Heart right ventricle (tissue), 16 donors: ENCODE measurements at regions of chr6 and their contacts with region 1.

Region 1: GRCh38 chr6:83067448-83068413 is at the start of gene DOP1A:
- DNase-seq: peak; percentile 95 to 96
- ATAC-seq: peak; percentile 96 to 99 (median 96)
- H3K4me3 ChIP-seq: peak within 1 kb of the TSS; percentile 64 to 93 (median 78)
- H3K27ac ChIP-seq: peak within 1 kb of the TSS; percentile 39 to 93 (median 87)
- H3K4me1 ChIP-seq: peaks cover 0 to 62% (median 32%) of the 10 kb centered on the region in 9 donors
- H3K27me3 ChIP-seq: no peaks in the 10 kb centered on the region
- CTCF ChIP-seq: peak; percentile 93 to 100 (median 98)
- total RNA-seq, gene DOP1A: 10.0 to 26.8 (median 22.2) TPM

Region 2: DNA sequence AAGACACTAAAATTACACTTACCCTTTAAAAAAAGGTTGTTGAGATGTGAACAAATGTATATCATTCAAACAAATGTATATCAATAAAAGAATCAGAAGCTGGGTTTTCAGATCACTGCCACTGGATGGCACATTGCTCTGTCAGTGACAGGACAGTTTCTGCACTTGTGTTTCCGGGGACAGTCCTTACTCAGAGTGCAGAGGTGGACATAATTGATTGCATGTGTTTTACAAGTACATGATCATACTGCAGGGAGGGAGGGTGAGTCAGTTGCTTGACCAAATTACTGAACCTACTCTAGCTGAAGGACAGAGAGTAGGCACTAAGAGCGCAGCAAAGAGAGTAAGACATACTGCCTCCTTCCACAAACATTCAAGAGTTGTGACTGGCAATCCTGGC is 1617.6 kb before region 1 on chr6:
- intact Hi-C with region 1: no loop called
- DNase-seq: no peak
- ATAC-seq: peak in 5 of 8 donors; percentile 33 to 72 (median 37)
- H3K4me3 ChIP-seq: no peak overlapping the region
- H3K27ac ChIP-seq: no peak overlapping the region
- H3K4me1 ChIP-seq: no peaks in the 10 kb centered on the region
- H3K27me3 ChIP-seq: no peaks in the 10 kb centered on the region
- CTCF ChIP-seq: peak in 1 of 9 donors; percentile 13

Region 3: DNA sequence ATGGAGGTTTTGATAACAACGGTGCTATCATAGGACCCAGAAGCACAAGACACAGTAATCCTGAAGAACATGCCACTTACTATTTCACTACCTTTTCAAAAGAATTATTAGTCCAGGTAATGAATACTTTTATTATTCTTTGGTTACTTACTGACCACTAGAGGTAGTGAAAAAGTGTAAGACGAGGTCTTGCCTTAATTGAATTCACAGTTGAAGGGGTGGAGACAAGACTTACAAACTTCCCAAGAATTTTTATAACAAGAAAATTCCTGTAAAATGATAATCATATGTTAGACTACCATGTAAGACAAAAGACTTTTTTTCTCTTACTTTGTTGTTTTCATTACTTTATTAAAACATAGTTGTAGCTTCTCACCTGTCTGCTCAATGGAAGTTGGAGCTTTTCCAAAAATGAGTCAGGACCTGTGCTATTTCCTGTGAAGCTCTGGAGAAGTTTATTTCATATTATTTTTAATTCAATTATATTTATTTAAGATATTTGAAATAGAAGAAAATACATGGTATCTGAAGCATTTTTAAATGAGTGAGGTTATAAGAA is 52.1 kb after region 1 on chr6:
- intact Hi-C with region 1: loop called in 1 of 10 experiments (anchors 5 kb)
- DNase-seq: no peak
- ATAC-seq: no peak
- H3K4me3 ChIP-seq: no peak overlapping the region
- H3K27ac ChIP-seq: no peak overlapping the region
- H3K4me1 ChIP-seq: no peaks in the 10 kb centered on the region
- H3K27me3 ChIP-seq: no peaks in the 10 kb centered on the region
- CTCF ChIP-seq: no peak

Region 4: GRCh38 chr6:83199863-83200225 is 132.1 kb after region 1 on chr6:
- intact Hi-C with region 1: loop called in 4 of 10 experiments (anchors 5 to 10 kb)
- DNase-seq: no peak
- ATAC-seq: peak in 2 of 8 donors; percentile 46 to 67
- H3K4me3 ChIP-seq: no peak overlapping the region
- H3K27ac ChIP-seq: no peak overlapping the region
- H3K4me1 ChIP-seq: peaks cover 0 to 15% (median under 1%) of the 10 kb centered on the region in 9 donors
- H3K27me3 ChIP-seq: no peaks in the 10 kb centered on the region
- CTCF ChIP-seq: no peak

Region 5: DNA sequence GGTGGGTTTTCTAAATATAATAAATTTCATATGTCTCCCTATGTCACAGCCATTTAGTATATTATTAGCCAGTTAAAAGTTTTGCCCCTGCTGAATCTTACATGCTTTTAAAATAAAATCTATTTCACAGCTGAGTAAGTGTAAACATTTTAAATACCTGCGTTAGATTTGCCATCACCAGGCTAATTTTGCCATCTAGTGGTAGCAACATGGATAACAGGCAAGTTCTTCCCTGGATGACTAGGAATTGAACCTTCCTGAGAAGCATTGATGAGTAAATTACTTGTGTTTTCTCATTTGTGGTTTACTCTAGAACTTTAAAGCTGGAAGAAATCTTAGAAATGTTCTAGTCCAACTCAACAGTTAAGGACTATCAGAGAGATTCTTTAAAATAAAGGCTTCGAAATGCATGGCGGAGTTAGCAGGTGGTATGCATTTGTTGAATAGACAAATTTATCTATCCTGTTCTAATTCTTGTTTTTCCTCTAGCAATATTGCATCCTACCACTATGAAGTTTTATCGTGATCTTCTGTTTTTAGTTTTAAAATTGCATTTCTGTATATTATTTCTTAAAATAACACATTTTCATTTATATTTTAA is 447.2 kb after region 1 on chr6:
- intact Hi-C with region 1: loop called in 7 of 10 experiments (anchors 2 to 10 kb)
- DNase-seq: peak in 1 of 2 donors; percentile 16
- ATAC-seq: no peak
- H3K4me3 ChIP-seq: no peak overlapping the region
- H3K27ac ChIP-seq: no peak overlapping the region
- H3K4me1 ChIP-seq: peaks cover 0 to 12% (median 6%) of the 10 kb centered on the region in 9 donors
- H3K27me3 ChIP-seq: peaks cover 0 to 28% (median 0%) of the 10 kb centered on the region in 7 donors
- CTCF ChIP-seq: peak; percentile 53 to 84 (median 80)